ENCODE measurements at regions of chr6 and their contacts with region 1.

Region 1: DNA sequence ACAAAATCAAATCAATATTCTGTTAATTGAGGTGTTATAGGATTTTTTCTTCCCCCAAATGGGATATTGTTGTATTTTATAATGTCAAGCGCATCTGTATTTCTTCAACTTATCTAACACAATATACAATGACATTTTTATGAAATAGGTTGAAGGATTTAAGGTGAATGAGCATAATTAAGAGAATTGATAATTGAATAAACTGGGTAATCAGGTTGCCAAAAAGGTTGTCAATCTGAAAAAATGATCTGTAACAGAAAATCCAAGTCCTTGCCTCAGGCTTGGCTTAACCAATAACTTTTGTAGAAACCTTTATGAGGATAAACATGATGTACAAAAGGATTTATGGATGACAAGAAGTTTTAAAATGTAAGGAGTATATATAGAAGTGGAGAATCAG is 1101.7 kb upstream of the EYS start:
- DNase-seq: no peak
- H3K4me3 ChIP-seq: no peak overlapping the region
- H3K27ac ChIP-seq: no peak overlapping the region
- H3K4me1 ChIP-seq: no peaks in the 10 kb centered on the region
- H3K27me3 ChIP-seq: no peaks in the 10 kb centered on the region
- CTCF ChIP-seq: no peak
- POLR2A ChIP-seq: no peak

Region 2: GRCh38 chr6:66578362-66578761 is 230.4 kb before region 1 on chr6:
- intact Hi-C with region 1: loop called (anchors 10 kb)
- DNase-seq: no peak
- H3K4me3 ChIP-seq: no peak overlapping the region
- H3K27ac ChIP-seq: no peak overlapping the region
- H3K4me1 ChIP-seq: no peaks in the 10 kb centered on the region
- H3K27me3 ChIP-seq: no peaks in the 10 kb centered on the region
- CTCF ChIP-seq: no peak
- POLR2A ChIP-seq: no peak

Region 3: GRCh38 chr6:67880939-67881705 is 1072.4 kb after region 1 on chr6:
- intact Hi-C with region 1: no loop called
- DNase-seq: no peak
- H3K4me3 ChIP-seq: no peak overlapping the region
- H3K27ac ChIP-seq: no peak overlapping the region
- H3K4me1 ChIP-seq: no peaks in the 10 kb centered on the region
- H3K27me3 ChIP-seq: no peaks in the 10 kb centered on the region
- CTCF ChIP-seq: no peak
- POLR2A ChIP-seq: no peak